Cardiac septum (tissue), 1 donor: ENCODE measurements at regions of chr15 and their contacts with region 1.

Region 1: DNA sequence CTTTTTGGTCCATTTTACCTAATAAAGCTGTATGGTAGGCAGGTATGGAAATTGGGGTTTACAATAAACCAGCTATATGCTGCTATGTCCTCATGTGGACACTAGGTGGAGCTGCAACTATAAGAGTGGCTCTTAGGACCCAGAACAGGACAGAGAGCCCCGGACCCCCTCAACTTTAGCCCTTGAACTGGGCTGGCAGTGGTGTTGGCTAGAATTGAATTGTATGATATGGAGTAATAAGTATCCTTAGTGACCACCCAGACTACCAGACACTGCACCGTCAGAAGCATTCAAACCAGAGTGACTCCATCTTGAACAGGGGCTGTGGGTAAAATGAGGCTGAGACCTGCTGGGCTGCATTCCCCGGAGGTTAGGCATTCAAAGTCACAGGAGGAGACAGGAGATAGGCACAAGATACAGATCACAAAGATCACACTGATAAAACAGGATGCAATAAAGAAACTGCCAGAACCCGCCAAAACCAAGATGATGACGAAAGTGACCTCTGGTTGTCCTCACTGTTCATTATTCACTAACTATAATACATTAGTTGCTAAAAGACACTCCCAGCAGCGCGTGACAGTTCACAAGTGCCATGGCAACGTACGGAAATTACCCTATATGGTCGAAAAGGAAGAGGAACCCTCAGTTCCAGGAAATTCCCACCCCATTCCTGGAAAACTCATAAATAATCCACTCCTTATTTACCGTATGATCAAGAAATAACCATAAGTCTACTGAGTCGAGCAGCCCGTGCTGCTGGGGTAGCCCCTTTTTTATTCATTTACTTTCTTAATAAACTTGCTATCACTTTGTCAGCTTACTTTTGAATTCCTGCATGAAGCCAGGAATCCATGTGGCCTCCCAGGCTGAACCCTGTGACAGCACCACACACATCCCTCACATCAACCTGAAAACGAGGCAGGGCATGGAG is 68.7 kb upstream of the BLM start:
- DNase-seq: peak; percentile 85

Region 2: DNA sequence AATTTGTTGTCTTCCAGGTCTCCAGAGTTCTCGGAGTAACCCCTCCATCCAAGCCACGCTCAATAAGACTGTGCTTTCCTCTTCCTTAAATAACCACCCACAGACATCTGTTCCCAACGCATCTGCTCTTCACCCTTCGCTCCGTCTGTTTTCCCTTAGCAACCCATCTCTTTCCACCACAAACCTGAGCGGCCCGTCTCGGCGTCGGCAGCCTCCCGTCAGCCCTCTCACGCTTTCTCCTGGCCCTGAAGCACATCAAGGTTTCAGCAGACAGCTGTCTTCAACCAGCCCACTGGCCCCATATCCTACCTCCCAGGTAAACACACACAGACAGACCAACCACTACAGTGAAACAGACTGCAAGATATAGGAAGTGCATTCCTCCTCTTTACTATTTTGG is 19.2 kb before region 1 on chr15:
- intact Hi-C with region 1: no loop called
- DNase-seq: peak; percentile 20

Region 3: DNA sequence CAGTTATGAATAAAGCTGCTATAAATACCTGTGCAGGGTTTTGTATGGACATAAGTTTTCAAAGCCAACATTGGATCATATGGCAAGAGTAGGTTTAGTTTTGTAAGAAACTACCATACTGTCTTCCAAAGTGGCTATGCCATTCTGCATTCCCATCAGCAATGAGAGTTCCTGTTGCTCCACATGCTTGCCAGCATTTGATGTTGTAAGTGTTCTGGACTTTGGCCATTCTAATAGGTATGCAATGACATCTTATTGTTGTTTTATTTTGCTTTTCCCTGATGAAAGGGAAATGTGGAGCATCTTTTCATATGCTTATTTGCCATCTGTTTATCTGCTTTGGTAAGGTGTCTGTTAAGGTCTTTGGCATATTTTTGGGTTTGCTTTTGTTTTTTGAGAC is 46.6 kb after region 1 on chr15:
- intact Hi-C with region 1: loop called (anchors 2 kb)
- DNase-seq: no peak

Region 4: GRCh38 chr15:90931737-90932659 is 283.6 kb after region 1 on chr15 and contains the start of gene HDDC3:
- intact Hi-C with region 1: loop called (anchors 5 kb)
- DNase-seq: peak; percentile 97
- total RNA-seq, gene HDDC3: 11.8 TPM